PC-3 (cell line): ENCODE measurements at regions of chr9 and their contacts with region 1.

Region 1: GRCh38 chr9:10173561-10173960 is 439.2 kb downstream of the PTPRD start:
- DNase-seq: no peak
- ATAC-seq: no peak
- H3K4me3 ChIP-seq: no peak overlapping the region
- H3K27ac ChIP-seq: no peak overlapping the region
- H3K4me1 ChIP-seq: no peaks in the 10 kb centered on the region
- H3K27me3 ChIP-seq: no peaks in the 10 kb centered on the region
- CTCF ChIP-seq: no peak

Region 2: GRCh38 chr9:10148796-10149195 is 24.8 kb before region 1 on chr9:
- CTCF ChIA-PET with region 1: interaction called, 10 read pairs
- POLR2A ChIA-PET with region 1: no interaction called
- intact Hi-C with region 1: no loop called
- DNase-seq: no peak
- ATAC-seq: no peak
- H3K4me3 ChIP-seq: no peak overlapping the region
- H3K27ac ChIP-seq: no peak overlapping the region
- H3K4me1 ChIP-seq: no peaks in the 10 kb centered on the region
- H3K27me3 ChIP-seq: no peaks in the 10 kb centered on the region
- CTCF ChIP-seq: no peak